ENCODE measurements at regions of chr17 and their contacts with region 1.

Region 1: GRCh38 chr17:59914274-59914854 is 21.4 kb downstream of the RPS6KB1 start:
- DNase-seq: no peak
- ATAC-seq: peak in 1 of 8 donors; percentile 35
- H3K4me3 ChIP-seq: no peak overlapping the region
- H3K27ac ChIP-seq: no peak overlapping the region
- H3K4me1 ChIP-seq: no peaks in the 10 kb centered on the region
- H3K27me3 ChIP-seq: no peaks in the 10 kb centered on the region
- CTCF ChIP-seq: peak; percentile 47 to 79 (median 72)

Region 2: DNA sequence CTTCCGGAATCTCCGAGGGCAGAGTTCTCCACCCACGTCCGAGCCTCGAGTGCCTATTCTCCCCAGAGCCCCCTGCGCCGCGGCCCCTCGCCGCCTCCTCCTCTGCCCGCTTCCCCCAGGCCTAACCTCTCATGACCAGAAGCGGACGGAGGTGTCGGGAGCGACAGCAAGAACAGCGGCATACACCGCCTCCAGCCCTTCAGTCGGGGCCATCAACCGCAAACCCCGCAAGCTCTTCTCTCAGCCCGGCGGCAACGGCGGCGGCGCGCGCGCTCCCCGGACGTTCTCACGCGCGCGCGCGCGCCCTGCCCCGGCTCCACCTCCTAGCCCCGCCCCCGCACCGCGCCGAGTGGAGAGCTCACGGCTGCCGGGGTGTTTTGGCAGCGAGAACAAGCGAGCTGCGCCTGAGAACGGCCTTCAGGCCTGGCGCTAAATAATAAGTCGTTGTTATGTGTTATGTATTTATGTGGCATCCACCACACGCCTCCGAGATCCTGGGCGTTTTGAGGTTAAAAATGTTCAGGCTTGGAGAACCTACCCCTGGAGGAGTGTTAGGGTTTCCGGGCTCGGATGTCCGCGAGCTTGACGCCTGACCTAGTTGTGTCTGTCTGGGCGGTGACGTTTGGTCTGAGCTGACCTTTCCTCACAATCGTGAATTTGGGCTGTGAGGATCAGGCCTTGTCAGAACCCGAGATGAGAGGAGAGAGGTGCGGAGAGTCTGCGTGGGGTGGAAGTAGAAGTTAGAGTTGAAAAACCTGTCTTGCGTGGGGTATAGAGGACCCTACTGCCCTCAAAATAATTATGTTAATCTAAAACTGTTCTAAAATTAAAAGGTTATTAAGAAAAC is 50.3 kb after region 1 on chr17 and contains the start of gene RNFT1:
- intact Hi-C with region 1: loop called in 1 of 10 experiments (anchors 5 kb)
- DNase-seq: peak; percentile 92 to 93
- ATAC-seq: peak; percentile 97 to 99 (median 98)
- H3K4me3 ChIP-seq: peak within 1 kb of the TSS; percentile 51 to 98 (median 78)
- H3K27ac ChIP-seq: peak within 1 kb of the TSS; percentile 48 to 98 (median 94)
- H3K4me1 ChIP-seq: peaks cover 5 to 32% (median 17%) of the 10 kb centered on the region in 9 donors
- H3K27me3 ChIP-seq: no peaks in the 10 kb centered on the region
- CTCF ChIP-seq: no peak
- total RNA-seq, gene RNFT1: 5.8 to 12.5 (median 8.4) TPM

Region 3: DNA sequence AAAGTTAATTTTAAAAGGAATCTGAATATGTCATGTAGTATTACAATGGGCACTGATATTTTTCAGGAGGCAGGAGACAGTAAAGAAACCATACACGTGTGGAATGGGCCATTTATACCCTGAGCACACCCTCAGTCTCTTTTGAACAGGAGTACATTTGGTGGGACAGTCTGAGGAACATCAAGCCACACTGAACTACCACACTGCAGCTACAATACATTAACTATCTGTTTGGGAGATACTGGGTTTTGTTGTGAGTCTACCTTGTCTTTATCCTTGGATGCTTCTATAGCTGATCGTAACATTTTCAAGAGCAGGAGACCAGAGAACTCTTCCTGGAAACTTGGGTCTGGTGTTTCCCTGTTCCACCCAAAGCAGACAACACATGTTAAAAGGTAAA is 132.7 kb after region 1 on chr17:
- intact Hi-C with region 1: no loop called
- DNase-seq: no peak
- ATAC-seq: no peak
- H3K4me3 ChIP-seq: no peak overlapping the region
- H3K27ac ChIP-seq: no peak overlapping the region
- H3K4me1 ChIP-seq: no peaks in the 10 kb centered on the region
- H3K27me3 ChIP-seq: no peaks in the 10 kb centered on the region
- CTCF ChIP-seq: no peak

Region 4: DNA sequence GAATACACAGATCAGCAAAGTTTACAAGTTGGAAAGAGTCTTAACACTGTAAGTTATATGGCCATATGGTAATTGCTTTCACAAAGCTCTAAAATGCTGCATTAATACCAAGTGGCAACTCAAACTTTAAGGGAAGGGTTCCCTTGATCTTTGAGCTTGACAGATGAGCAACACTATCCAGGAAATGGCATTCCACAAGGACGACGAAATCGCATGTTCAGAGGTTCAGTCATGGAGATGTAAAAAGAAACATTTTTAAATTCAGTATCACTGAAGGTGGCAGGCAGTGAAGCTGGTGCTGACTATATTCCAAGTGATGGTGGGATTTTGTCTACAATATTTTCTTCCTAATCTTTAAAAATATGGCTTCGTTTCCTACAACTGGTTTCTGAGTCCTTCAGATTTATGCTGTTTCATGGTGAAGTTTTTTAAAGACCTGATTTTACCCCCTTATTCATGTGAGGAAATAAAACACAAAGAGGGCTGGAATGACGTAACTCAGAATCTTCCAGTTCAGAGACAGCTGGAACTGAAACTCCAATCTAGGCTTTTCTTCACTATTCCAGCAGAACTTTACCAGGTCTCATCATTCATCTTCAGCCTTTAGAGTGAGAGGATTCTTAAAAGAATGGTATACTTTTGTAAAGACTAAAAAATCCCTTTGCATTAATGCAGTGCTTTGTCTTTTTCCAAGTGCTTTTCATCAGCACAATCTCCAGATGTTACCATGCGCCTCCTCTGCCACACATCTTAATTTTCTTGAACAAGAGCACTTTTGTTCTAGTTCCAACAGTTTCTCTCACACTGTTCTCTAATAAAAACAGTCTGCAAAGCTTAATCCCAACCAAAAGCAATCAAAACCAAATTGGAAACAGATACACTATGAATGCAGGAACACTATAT is 528.2 kb after region 1 on chr17:
- intact Hi-C with region 1: loop called in 1 of 10 experiments (anchors 10 kb)
- DNase-seq: no peak
- ATAC-seq: peak in 4 of 8 donors; percentile 25 to 57 (median 46)
- H3K4me3 ChIP-seq: no peak overlapping the region
- H3K27ac ChIP-seq: peak overlapping the region in 5 of 10 donors; percentile 0 to 49 (median 44)
- H3K4me1 ChIP-seq: peaks cover 0 to 29% (median 5%) of the 10 kb centered on the region in 9 donors
- H3K27me3 ChIP-seq: peaks cover 0 to 6% (median 0%) of the 10 kb centered on the region in 7 donors
- CTCF ChIP-seq: no peak